Left lung (tissue), 14 donors: ENCODE measurements at regions of chr7 and their contacts with region 1.

Region 1: GRCh38 chr7:111752022-111752582 is 189.8 kb upstream of the IMMP2L start:
- DNase-seq: peak in 3 of 4 donors; percentile 43 to 84 (median 45)
- ATAC-seq: peak; percentile 73
- H3K4me3 ChIP-seq: no peak overlapping the region
- H3K27ac ChIP-seq: no peak overlapping the region
- H3K4me1 ChIP-seq: no peaks in the 10 kb centered on the region
- H3K27me3 ChIP-seq: no peaks in the 10 kb centered on the region
- CTCF ChIP-seq: peak; percentile 72 to 75

Region 2: GRCh38 chr7:112422842-112423496 is 670.9 kb after region 1 on chr7:
- intact Hi-C with region 1: loop called in 1 of 2 experiments (anchors 10 kb)
- DNase-seq: peak in 1 of 4 donors; percentile 69
- ATAC-seq: peak; percentile 86
- H3K4me3 ChIP-seq: no peak overlapping the region
- H3K27ac ChIP-seq: peak overlapping the region in 1 of 2 donors; percentile 76
- H3K4me1 ChIP-seq: peaks cover 5 to 18% of the 10 kb centered on the region in 2 donors
- H3K27me3 ChIP-seq: no peaks in the 10 kb centered on the region
- CTCF ChIP-seq: no peak